ENCODE measurements at regions of chr7 and their contacts with region 1.

Region 1: DNA sequence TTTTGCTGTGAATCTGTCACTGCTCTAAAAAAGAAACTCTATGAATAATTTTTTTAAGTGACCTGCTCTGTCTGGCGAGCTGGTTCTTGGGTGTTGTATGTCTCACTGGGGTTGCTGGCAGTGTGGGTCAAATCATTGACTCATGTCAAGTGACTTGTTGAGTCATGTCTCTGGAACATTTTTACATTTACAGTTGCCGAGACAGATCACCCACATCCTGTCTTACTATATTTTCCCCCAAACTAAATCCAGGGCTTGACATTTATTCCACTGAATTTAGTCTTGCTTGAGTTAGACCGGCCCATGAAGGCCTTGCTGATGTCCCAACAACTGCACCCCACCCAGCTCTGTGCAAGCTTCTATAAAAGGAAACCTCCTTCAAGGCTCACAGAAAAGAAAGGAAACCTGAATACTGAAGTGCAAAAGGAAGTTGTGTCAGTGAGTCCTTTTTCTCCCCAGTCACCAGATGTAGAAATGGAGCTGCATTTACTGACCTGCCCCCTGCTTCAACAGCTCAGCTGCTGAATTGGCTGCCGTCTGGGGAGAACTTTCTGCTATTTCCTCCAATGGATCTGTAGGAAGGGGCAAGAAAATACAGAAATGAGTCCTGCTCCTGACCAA is 290.3 kb downstream of the TNS3 start:
- DNase-seq: no peak
- ATAC-seq: peak in 3 of 8 donors; percentile 21 to 67 (median 60)
- H3K4me3 ChIP-seq: no peak overlapping the region
- H3K27ac ChIP-seq: peak overlapping the region in 8 of 10 donors; percentile 6 to 72 (median 34)
- H3K4me1 ChIP-seq: peaks cover 9 to 59% (median 43%) of the 10 kb centered on the region in 9 donors
- H3K27me3 ChIP-seq: no peaks in the 10 kb centered on the region
- CTCF ChIP-seq: no peak

Region 2: DNA sequence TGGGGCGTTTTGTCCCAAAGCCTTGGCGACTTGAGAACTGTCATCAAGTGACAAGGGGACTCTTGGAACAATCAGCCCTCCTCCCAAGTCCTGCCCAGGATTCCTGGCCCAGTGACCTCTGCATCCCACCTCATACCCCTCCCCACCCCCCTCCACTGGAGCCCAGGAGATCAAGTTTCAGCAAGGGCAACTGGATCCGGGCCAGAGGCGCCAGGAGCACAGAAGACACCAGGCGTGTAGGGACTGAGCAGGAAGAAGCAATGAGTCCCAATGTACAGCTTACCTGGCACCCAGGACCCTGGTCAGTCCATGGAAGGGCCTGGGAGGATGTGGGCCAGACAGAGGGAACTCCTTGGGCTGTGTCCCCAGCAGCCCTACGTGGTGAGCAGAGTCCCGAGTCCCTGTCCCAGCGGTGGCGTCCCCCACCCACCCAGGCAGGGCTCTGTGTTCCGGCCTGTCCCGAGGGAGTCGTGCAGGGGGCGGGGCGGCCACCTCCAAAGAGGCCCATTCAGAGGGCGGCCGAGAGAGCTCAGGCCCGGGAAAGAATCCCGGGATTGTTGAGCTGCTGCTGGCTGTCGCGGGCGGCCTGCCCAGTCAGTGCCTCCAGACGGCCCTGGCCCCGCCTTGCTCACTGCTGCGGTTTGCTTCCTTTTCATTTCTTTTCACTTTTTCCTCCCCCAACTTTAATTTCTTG is 36.3 kb after region 1 on chr7:
- intact Hi-C with region 1: loop called in 2 of 10 experiments (anchors 5 kb)
- DNase-seq: peak; percentile 91 to 94
- ATAC-seq: peak; percentile 88 to 95 (median 91)
- H3K4me3 ChIP-seq: peak overlapping the region in 9 of 10 donors; percentile 14 to 54 (median 47)
- H3K27ac ChIP-seq: peak overlapping the region; percentile 81 to 96 (median 90)
- H3K4me1 ChIP-seq: peaks cover 22 to 90% (median 60%) of the 10 kb centered on the region in 9 donors
- H3K27me3 ChIP-seq: no peaks in the 10 kb centered on the region
- CTCF ChIP-seq: no peak